ENCODE measurements at regions of chr7 and their contacts with region 1.

Region 1: DNA sequence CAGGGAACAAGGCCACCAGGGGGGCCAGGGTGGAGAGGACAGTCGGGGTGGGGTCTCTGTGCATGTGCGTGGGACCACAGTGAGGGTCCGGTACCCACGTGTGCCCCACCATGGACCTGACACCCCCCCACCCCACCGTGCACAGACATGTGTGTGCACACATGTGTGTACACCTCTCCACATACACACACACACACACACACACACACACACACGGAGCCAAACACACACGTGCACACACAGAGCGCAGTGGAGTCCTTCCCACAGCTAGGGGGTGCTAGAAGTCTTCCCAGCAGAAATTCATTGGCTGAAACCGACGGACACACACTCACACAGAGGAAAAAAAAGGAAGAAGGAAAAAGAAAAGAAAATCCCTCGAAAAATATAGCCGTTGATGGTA is 42.8 kb upstream of the GNA12 start:
- DNase-seq: peak; percentile 87
- ATAC-seq: peak; percentile 85 to 96
- H3K4me3 ChIP-seq: no peak overlapping the region
- H3K27ac ChIP-seq: 0 out of 6 replicates have a peak overlapping the region, but pooled peaks of 1 of the 2 experiments have one; percentile 8
- H3K4me1 ChIP-seq: no peaks in the 10 kb centered on the region
- CTCF ChIP-seq: peak; percentile 80
- EP300 ChIP-seq: no peak
- POLR2A ChIP-seq: no peak
- RAD21 ChIP-seq: peak; percentile 92 to 94

Region 2: DNA sequence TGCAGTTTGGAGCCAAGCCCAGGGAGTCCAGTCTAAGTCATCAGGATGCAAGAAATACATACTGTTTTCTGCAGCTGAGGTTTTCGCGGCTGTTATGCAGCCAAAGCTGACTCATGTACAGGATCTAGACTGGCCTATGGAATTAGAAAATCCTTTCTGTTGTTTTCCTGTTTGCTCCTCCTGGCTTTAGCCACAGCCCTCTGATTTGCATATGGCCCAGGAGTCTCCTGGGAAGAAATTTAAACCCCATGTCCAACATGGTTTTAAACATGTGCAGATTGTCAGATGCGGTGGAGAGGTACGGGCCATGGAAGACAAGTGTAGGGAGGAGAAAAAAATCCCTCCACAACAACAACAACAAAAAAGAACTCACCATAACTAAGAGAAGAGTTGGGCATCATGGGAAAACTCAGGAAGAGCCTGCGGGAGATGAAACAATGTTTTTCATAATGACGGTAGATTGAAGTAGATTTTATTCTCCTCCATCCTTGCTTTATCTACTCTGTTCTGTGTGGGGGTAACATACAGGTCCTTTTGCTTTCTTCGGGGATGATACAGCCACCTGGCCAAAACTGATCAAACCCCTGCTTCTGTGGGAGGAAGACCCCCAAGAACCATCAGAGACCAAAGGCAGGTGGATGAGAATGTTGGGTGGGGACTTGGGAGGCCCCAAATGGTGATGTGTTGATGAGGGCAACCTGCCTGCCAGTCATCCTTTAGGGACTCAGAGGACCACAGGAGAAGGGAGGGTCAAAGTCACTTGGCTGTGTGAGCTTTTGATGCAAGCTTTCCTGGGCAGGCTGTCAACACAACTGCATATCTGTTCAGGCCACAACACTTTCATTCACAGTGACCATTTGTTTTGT is 13.0 kb before region 1 on chr7:
- CTCF ChIA-PET with region 1: interaction called, 29 read pairs
- POLR2A ChIA-PET with region 1: no interaction called
- DNase-seq: peak; percentile 73 to 79
- ATAC-seq: peak; percentile 64 to 81
- H3K4me3 ChIP-seq: no peak overlapping the region
- H3K27ac ChIP-seq: peak overlapping the region; percentile 74 to 77
- H3K4me1 ChIP-seq: peaks cover 11% of the 10 kb centered on the region
- CTCF ChIP-seq: no peak
- EP300 ChIP-seq: no peak
- POLR2A ChIP-seq: peak; percentile 90
- RAD21 ChIP-seq: no peak

Region 3: GRCh38 chr7:2903682-2904162 is 16.8 kb after region 1 on chr7:
- CTCF ChIA-PET with region 1: interaction called, 19 read pairs
- POLR2A ChIA-PET with region 1: no interaction called
- DNase-seq: no peak
- ATAC-seq: peak in 1 of 2 experiments; percentile 53; a peak in 3 of 6 replicates
- H3K4me3 ChIP-seq: no peak overlapping the region
- H3K27ac ChIP-seq: no peak overlapping the region
- H3K4me1 ChIP-seq: no peaks in the 10 kb centered on the region
- CTCF ChIP-seq: no peak
- EP300 ChIP-seq: no peak
- POLR2A ChIP-seq: no peak
- RAD21 ChIP-seq: no peak

Region 4: GRCh38 chr7:2921653-2922347 is 34.9 kb after region 1 on chr7:
- CTCF ChIA-PET with region 1: interaction called, 14 read pairs
- POLR2A ChIA-PET with region 1: no interaction called
- DNase-seq: peak in 1 of 2 experiments; percentile 25
- ATAC-seq: peak; percentile 49 to 77; a peak in 3 of 6 replicates
- H3K4me3 ChIP-seq: no peak overlapping the region
- H3K27ac ChIP-seq: no peak overlapping the region
- H3K4me1 ChIP-seq: no peaks in the 10 kb centered on the region
- CTCF ChIP-seq: peak; percentile 20; the same call in 1 of the 3 replicates
- EP300 ChIP-seq: no peak
- POLR2A ChIP-seq: no peak
- RAD21 ChIP-seq: peak in 1 of 2 experiments; percentile 19; a peak in 2 of 5 replicates

Region 5: GRCh38 chr7:3154912-3155494 is 268.1 kb after region 1 on chr7:
- CTCF ChIA-PET with region 1: interaction called, 32 read pairs
- POLR2A ChIA-PET with region 1: no interaction called
- DNase-seq: peak; percentile 45 to 53
- ATAC-seq: peak in 1 of 2 experiments; percentile 69; a peak in 2 of 6 replicates
- H3K4me3 ChIP-seq: no peak overlapping the region
- H3K27ac ChIP-seq: no peak overlapping the region
- H3K4me1 ChIP-seq: no peaks in the 10 kb centered on the region
- CTCF ChIP-seq: peak; percentile 63
- EP300 ChIP-seq: no peak
- POLR2A ChIP-seq: no peak
- RAD21 ChIP-seq: peak; percentile 73 to 82